PC-3 (cell line): ENCODE measurements at regions of chr18 and their contacts with region 1.

Region 1: GRCh38 chr18:62186774-62187542 is at the starts of genes PIGN and RELCH:
- DNase-seq: peak; percentile 98
- ATAC-seq: peak; percentile 84
- H3K4me3 ChIP-seq: peak within 1 kb of the TSS; percentile 99
- H3K27ac ChIP-seq: peak within 1 kb of the TSS; percentile 47
- H3K4me1 ChIP-seq: peaks cover 34% of the 10 kb centered on the region
- H3K27me3 ChIP-seq: no peaks in the 10 kb centered on the region
- CTCF ChIP-seq: no peak
- total RNA-seq, gene PIGN: 20.3 and 22.7 TPM in 2 replicates
- total RNA-seq, gene RELCH: 17.3 and 21.6 TPM in 2 replicates

Region 2: DNA sequence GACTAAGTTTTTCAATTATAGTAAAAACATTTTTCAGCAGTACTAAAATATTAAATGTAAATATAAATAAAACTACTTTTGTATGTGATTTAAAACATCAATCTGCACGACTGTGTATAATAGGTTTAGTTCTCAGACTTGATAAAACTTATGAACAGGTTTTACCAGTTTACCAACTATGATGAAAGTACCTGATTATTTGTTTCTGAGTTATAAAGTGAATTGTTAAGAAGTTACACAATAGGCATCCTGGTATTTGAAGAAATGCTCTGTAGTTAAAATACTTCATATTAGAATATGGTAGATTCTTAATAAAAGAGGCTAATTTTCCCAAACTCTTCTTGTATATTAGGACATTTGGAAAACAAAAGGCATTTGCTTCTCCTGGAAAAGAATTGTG is 14.9 kb after region 1 on chr18:
- CTCF ChIA-PET with region 1: no interaction called
- POLR2A ChIA-PET with region 1: no interaction called
- intact Hi-C with region 1: loop called (anchors 2 kb)
- DNase-seq: peak; percentile 84
- ATAC-seq: no peak; the same call in 1 of the 2 replicates
- H3K4me3 ChIP-seq: no peak overlapping the region
- H3K27ac ChIP-seq: no peak overlapping the region
- H3K4me1 ChIP-seq: peaks cover 16% of the 10 kb centered on the region
- H3K27me3 ChIP-seq: no peaks in the 10 kb centered on the region
- CTCF ChIP-seq: no peak

Region 3: DNA sequence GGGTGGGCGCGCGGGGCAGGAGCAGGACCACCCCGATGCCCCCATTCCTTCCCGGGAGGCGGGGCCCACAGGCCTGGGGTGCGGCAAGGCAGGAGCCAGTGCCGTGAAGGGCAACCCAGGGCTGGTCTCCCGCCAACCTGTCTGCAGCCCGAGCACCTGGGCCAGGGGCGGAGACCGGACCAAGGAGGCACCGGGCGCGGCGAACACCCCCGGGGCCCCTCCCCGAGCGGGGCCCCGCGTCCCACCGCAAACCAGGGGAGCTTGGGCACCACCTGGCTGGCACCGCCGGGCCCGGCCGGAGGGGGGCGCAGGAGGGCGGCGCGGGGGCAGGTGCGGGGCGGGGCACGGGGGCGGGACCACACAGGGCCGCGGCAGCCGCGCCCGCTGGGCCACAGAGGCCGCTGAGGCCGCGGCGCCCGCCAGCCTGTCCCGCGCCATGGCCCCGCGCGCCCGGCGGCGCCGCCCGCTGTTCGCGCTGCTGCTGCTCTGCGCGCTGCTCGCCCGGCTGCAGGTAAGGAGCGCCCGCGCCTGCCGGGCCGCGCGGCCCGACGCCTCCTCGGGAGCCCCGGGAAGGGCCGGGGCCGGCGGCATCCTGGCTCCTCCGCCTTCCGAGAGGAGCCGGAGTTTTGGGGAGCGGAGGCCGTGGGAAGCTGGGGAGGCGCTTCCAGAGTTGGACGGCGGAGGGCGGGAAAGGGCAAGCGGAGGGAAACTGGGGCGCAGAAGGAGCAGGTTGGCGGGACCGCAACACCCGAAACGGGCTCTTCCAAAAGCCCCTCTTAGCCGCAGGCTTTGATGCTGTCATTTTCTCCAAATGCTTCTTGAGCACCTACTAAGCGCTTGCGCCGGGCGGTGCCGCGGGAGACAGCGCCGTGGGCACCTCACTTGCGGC is 138.2 kb after region 1 on chr18 and contains the start of gene TNFRSF11A:
- CTCF ChIA-PET with region 1: no interaction called
- POLR2A ChIA-PET with region 1: no interaction called
- intact Hi-C with region 1: loop called (anchors 1 kb)
- DNase-seq: peak; percentile 71
- ATAC-seq: peak; percentile 56
- H3K4me3 ChIP-seq: peak within 1 kb of the TSS; percentile 98
- H3K27ac ChIP-seq: peak within 1 kb of the TSS; percentile 29
- H3K4me1 ChIP-seq: peaks cover 34% of the 10 kb centered on the region
- H3K27me3 ChIP-seq: no peaks in the 10 kb centered on the region
- CTCF ChIP-seq: peak; percentile 38
- total RNA-seq, gene TNFRSF11A: 25.9 and 26.5 TPM in 2 replicates

Region 4: GRCh38 chr18:62399781-62400308 is 212.9 kb after region 1 on chr18:
- CTCF ChIA-PET with region 1: no interaction called
- POLR2A ChIA-PET with region 1: no interaction called
- intact Hi-C with region 1: loop called (anchors 1 kb)
- DNase-seq: peak; percentile 93
- ATAC-seq: peak; percentile 97
- H3K4me3 ChIP-seq: no peak overlapping the region
- H3K27ac ChIP-seq: peak overlapping the region; percentile 87
- H3K4me1 ChIP-seq: peaks cover 30% of the 10 kb centered on the region
- H3K27me3 ChIP-seq: no peaks in the 10 kb centered on the region
- CTCF ChIP-seq: peak; percentile 78

Region 5: DNA sequence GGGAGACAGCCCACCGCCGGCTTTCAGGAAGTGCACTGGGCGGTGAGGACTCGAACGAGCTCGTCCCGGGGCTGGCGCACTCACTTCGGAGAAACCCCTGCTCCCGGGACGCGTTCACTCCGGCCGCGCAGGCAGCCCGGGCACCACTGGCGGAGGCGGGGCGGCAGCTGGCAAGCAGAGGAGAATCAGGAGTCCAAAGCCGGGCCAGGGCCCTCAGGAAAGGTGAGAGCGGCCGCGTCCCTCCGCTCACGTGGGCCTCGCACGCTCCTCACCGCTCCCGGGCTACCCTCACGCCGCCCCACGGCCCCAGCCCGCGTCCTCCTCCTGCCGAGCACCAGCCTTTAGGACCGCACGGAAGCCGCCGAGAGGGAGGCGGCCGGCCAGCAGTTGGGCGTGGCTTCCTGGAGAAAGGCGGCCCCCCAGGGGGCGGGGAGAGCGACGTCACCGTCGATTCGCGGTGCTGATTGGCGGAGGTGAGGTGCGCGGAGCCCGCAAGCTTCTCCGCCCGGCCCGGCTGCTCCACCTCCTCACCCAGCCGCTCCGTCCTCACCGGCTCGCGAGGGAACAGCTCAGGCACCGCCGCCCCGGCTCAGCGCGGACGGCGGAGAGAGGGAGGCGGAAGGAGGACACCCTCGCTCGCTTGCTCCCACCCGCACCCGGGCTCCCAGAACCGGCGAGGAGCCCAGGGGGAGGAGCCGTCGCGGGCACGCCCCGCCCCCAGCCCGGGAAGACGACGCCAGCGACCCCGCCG is 335.7 kb after region 1 on chr18 and contains the start of gene ZCCHC2:
- CTCF ChIA-PET with region 1: no interaction called
- POLR2A ChIA-PET with region 1: no interaction called
- intact Hi-C with region 1: loop called (anchors 10 kb)
- DNase-seq: peak; percentile 98
- ATAC-seq: peak; percentile 79
- H3K4me3 ChIP-seq: peak within 1 kb of the TSS; percentile 93
- H3K27ac ChIP-seq: peak within 1 kb of the TSS; percentile 86
- H3K4me1 ChIP-seq: peaks cover 28% of the 10 kb centered on the region
- H3K27me3 ChIP-seq: no peaks in the 10 kb centered on the region
- CTCF ChIP-seq: no peak
- total RNA-seq, gene ZCCHC2: 17.3 and 24.9 TPM in 2 replicates

Region 6: GRCh38 chr18:62537946-62538345 is 351.0 kb after region 1 on chr18:
- CTCF ChIA-PET with region 1: no interaction called
- POLR2A ChIA-PET with region 1: no interaction called
- intact Hi-C with region 1: no loop called
- DNase-seq: peak; percentile 74
- ATAC-seq: peak; percentile 84
- H3K4me3 ChIP-seq: 0 out of 2 replicates have a peak overlapping the region, but pooled peaks have one; percentile 12
- H3K27ac ChIP-seq: no peak overlapping the region
- H3K4me1 ChIP-seq: peaks cover 24% of the 10 kb centered on the region
- H3K27me3 ChIP-seq: no peaks in the 10 kb centered on the region
- CTCF ChIP-seq: no peak